Activated naive CD4-positive, alpha-beta T cell treated with anti-CD3 and anti-CD28 coated beads for 36 hours (primary cell): ENCODE measurements at regions of chr2 and their contacts with region 1.

Region 1: DNA sequence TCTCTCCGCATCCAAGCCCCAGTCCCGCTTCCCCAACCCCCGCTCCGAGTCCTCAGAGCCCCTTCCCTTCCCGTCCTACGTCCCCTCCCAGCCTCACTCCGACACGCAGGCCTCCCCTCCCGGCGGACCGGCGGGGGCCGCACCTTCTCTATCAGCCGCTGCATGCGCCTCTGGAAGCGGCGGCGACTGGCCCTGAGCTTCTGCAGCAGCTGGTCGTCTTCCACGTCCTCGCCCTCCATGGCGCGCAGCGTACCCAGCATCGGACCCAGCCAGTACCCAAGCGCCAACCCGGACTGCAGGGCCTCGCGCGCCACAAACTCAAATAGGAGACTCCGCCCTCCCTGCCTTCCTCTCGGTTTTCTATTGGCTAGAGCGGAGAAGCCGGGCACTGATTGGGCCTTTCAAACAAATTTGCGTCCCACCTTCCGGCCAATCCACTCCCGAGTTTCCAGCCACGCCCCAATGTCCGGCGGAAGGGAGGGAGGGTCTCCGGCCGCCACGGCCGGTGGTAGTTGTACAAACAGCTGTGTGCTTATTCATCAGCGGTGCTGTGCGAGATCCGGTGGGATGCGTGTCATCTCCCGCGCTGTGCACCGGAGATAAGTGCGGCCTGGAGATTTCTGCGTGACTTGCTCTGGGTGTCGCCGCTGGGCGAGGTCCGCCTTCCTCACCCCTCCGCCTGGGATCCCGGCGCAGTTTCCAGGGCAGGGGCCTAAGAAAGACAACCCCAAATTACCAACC is at the start of gene HJURP:
- DNase-seq: peak; percentile 98
- H3K4me3 Mint-ChIP-seq: peak within 1 kb of the TSS; percentile 93
- H3K27ac Mint-ChIP-seq: peak within 1 kb of the TSS; percentile 95
- H3K4me1 Mint-ChIP-seq: peaks cover 17% of the 10 kb centered on the region
- H3K27me3 Mint-ChIP-seq: peaks cover 7% of the 10 kb centered on the region
- total RNA-seq, gene HJURP: 127 to 129 TPM

Region 2: DNA sequence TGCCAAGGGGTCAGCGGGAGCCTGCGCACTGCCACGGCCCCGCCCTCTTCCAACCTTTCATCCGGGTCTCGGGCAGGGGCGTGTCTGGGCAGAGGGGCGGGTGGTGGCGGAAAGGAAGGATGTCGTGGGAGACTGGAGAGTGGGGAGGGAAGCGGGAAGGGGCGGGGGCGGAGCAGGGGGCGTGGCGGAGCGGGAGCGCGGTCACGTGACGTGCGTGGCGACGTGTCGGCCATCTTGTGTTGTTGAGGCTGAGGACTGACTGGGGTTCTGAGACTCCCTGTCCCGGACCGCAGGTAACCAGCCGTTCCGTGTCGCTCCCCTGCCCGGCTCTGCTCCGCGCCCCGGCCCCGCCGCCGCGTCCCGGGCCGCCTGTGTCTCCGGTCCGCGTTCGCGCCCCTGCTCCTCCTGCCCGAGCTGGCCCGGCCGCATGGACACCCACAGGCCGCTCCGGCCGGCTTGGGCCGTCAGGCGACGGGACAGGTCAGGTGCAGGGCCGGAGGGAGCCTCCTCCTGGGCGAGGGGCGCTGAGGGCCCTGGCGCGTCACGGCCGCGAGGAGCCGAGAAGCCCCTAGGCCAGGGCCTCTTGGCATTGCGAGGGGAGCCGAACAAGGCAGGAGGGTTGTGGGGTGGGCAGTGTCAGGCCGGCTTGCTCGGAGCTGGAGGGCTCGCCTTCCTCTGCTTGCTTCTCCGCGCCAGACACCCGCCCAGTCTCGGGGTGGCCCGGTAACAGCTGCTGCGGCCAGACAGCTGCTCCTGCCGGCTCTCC is 1157.1 kb before region 1 on chr2 and contains the start of gene GIGYF2:
- CTCF ChIA-PET with region 1: no interaction called
- intact Hi-C with region 1: loop called (anchors 5 kb)
- DNase-seq: peak; percentile 97
- H3K4me3 Mint-ChIP-seq: peak within 1 kb of the TSS; percentile 87
- H3K27ac Mint-ChIP-seq: peak within 1 kb of the TSS; percentile 70
- H3K4me1 Mint-ChIP-seq: peaks cover 36% of the 10 kb centered on the region
- H3K27me3 Mint-ChIP-seq: no peaks in the 10 kb centered on the region
- total RNA-seq, gene GIGYF2: 49.7 to 52.8 TPM

Region 3: GRCh38 chr2:233369897-233370685 is 484.3 kb before region 1 on chr2:
- CTCF ChIA-PET with region 1: no interaction called
- intact Hi-C with region 1: no loop called
- DNase-seq: no peak
- H3K4me3 Mint-ChIP-seq: no peak overlapping the region
- H3K27ac Mint-ChIP-seq: no peak overlapping the region
- H3K4me1 Mint-ChIP-seq: peaks cover 31% of the 10 kb centered on the region
- H3K27me3 Mint-ChIP-seq: no peaks in the 10 kb centered on the region

Region 4: DNA sequence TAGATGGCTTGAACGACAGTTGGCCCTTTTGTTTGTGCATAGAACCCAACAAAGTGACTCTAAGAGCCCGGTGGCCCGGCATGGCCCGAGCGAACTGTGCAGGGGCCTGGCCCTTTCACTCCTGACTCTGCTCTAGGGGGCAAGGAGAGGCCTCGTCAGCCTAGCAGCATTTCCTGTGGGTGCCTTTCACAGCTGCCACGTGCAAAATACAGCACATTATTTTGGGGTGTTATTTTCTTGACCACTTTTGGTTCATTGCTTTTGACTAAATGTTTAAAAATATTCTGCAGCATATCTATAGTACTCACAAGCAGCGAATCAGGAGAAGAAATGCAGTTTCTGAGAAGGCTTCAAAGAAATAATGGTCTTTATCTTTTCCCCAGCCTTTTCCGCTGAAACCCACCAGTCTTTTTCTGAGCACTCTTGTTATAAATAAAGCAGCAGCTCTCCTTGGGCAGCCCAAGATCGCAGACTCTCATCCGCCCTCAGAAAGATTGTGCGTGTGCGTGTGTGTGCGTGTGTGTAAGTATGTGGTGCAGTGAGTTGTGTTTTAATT is 468.8 kb before region 1 on chr2:
- CTCF ChIA-PET with region 1: no interaction called
- intact Hi-C with region 1: loop called (anchors 1 kb)
- DNase-seq: peak; percentile 38
- H3K4me3 Mint-ChIP-seq: peak overlapping the region; percentile 36
- H3K27ac Mint-ChIP-seq: peak overlapping the region; percentile 69
- H3K4me1 Mint-ChIP-seq: peaks cover 63% of the 10 kb centered on the region
- H3K27me3 Mint-ChIP-seq: no peaks in the 10 kb centered on the region

Region 5: DNA sequence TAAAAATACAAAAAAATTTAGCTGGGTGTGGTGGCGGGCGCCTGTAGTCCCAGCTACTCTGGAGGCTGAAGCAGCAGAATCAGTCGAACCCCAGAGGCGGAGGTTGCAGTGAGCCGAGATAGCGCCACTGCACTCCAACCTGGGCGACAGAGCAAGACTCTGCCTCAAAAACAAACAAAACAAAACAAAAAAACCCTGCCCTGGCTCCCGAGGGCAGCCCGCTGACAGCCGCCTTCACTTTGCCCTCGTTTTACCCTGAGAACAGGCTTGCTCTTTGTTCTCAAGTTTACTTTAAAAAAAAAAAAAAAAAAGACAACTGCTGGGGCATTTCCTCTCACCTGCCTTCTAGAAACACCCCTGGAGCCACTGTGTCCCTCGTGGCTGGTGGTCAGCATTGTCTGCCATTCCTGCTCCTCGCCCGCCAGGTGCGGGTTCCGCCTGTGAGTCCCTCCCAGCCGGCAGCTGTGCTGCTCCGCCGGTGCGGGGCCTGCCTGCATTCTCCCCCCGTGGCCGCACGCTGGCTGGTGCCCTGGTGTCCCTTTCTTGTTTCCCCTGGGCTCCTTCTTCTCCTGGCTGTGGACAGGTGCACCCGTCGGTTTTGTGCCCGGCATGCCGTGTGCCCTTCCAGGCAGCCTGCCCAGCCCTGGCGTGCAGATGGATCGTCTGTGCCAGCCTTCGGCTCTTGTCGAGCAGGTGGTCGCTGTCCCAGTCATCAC is 393.5 kb before region 1 on chr2:
- CTCF ChIA-PET with region 1: no interaction called
- intact Hi-C with region 1: no loop called
- DNase-seq: no peak
- H3K4me3 Mint-ChIP-seq: no peak overlapping the region
- H3K27ac Mint-ChIP-seq: no peak overlapping the region
- H3K4me1 Mint-ChIP-seq: no peaks in the 10 kb centered on the region
- H3K27me3 Mint-ChIP-seq: no peaks in the 10 kb centered on the region

Region 6: DNA sequence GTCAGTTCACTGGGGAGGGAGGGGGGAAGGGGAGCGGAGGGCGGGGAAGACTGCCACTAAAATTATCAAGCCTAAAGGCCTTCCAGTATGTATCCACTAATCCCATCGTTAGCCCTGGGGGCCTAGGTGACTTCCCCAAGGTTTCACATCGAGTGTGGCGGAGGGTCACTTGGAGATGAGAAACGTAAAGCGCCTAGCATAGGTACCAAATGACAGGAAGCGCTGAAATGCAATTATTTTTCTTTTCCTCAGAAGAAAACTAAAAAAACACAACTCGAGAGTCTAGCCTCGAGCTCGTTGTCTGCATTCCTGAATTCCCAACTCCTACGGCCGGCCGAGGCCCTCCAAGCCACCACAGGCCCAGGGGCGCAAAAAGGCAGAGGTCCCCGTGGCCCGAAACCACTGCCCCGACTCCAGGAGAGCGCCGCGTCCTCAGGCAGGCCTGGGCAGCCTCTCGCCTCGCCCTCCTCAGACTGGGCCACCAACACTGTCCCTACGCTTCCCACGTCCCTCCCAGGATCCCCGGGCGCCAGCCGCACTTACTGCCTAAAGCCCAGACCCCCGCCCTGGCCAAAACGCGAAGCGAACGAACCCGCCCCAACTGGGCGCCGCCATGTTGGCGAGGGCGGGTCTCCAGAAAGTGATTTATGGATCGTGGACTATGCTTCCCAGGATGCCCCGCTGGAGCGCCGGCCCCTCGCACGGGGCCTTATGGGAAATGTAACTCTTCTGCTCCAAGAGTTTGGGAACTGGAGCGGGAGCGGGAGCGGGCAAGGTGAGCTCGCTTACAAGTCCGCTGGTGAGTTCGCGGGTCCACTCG is 288.1 kb before region 1 on chr2 and contains the start of gene USP40:
- CTCF ChIA-PET with region 1: no interaction called
- intact Hi-C with region 1: loop called (anchors 1 kb)
- DNase-seq: peak; percentile 75
- H3K4me3 Mint-ChIP-seq: peak within 1 kb of the TSS; percentile 92
- H3K27ac Mint-ChIP-seq: peak within 1 kb of the TSS; percentile 92
- H3K4me1 Mint-ChIP-seq: peaks cover 9% of the 10 kb centered on the region
- H3K27me3 Mint-ChIP-seq: no peaks in the 10 kb centered on the region
- total RNA-seq, gene USP40: 15.3 to 17.5 TPM

Region 7: DNA sequence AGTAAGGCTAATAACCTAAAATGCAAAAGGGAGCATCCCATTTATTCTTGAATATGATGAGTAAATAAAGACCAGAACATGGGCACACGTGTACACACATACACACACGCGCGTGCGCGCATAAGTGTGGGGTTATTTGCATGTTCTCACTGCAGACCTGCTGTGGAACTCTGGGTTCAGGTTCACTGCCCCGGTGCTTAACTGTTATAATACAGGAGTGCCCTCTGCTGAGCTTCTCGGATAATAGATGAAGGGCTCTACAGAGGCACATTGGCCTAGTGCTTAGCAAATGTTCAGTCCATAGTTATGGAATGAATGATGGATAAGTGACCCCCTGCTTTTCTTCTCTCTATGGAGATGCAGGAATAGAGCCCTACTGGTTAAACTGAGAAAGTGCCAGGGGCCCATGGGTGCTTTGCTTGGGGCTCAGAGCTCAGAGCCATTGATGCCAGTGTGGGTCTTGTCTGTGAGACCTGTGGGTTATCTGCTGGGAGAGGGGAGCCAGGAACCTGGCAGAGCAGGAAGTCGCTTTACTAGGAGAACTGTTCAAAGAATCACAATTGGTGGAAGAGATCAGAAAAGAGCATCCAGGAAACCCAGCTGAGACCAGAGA is 646.1 kb after region 1 on chr2:
- CTCF ChIA-PET with region 1: no interaction called
- intact Hi-C with region 1: loop called (anchors 2 kb)
- DNase-seq: peak; percentile 83
- H3K4me3 Mint-ChIP-seq: no peak overlapping the region
- H3K27ac Mint-ChIP-seq: no peak overlapping the region
- H3K4me1 Mint-ChIP-seq: peaks cover 26% of the 10 kb centered on the region
- H3K27me3 Mint-ChIP-seq: no peaks in the 10 kb centered on the region